CD4-positive, alpha-beta memory T cell (primary cell): ENCODE measurements at regions of chr1 and their contacts with region 1.

Region 1: GRCh38 chr1:3618881-3619671 is 5.7 kb upstream of the TPRG1L start:
- DNase-seq: peak; percentile 74 to 81 (median 78)
- H3K4me3 ChIP-seq: no peak overlapping the region
- H3K4me3 Mint-ChIP-seq: no peak overlapping the region
- H3K27ac ChIP-seq: no peak overlapping the region
- H3K27ac Mint-ChIP-seq: peak overlapping the region in 2 of 7 donors; percentile 53 to 60
- H3K4me1 ChIP-seq: peaks cover 27% of the 10 kb centered on the region
- H3K4me1 Mint-ChIP-seq: peaks cover 20 to 40% (median 34%) of the 10 kb centered on the region in 4 donors
- H3K27me3 ChIP-seq: no peaks in the 10 kb centered on the region
- H3K27me3 Mint-ChIP-seq: peaks cover 0 to 1% of the 10 kb centered on the region in 2 donors

Region 2: DNA sequence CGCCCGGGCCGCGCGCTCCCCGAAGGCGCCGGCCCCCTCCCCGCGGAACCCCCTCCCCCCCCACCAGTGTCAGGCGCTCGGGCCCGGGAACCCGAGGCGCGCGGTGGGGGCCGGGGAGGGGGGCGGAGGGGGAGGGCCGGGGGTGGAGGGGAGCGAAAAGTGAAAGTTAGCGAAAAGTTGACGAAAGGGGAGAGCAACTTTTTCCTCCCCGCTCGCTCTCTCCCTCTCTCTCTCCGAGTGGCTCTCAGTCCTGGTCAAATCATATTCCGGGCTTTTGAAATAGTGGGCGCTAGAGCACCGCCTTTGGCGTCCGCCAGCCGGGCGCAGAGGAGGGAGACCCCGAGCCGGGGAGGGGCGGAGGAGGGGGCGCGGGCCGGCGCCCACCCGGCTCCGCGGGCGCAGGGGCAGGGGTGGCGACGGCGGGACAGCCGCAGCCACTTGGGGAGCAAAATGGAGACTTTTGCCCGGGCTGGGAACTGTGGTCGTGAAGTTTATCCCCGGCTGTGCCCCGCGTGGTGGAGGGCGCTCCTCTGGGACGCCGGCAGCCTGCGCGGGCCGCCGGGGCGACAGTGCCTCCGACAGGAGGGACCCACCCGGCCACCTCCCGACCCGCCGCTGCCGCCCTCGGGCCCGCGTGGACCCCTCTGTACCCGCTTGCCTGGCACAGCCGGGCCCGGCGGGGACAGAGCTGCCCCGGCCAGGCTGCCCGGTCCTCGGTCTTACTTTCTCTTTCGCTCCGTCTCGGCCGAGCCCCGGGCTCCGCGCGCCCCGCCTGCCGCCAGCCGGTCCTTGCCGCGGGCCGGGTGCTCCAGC is 549.4 kb before region 1 on chr1:
- CTCF ChIA-PET with region 1: no interaction called
- POLR2A ChIA-PET with region 1: no interaction called
- intact Hi-C with region 1: no loop called
- DNase-seq: no peak
- H3K4me3 ChIP-seq: no peak overlapping the region
- H3K4me3 Mint-ChIP-seq: peak overlapping the region in 5 of 8 donors; percentile 39 to 80 (median 54)
- H3K27ac ChIP-seq: no peak overlapping the region
- H3K27ac Mint-ChIP-seq: no peak overlapping the region
- H3K4me1 ChIP-seq: no peaks in the 10 kb centered on the region
- H3K4me1 Mint-ChIP-seq: peaks cover 0 to 4% (median 2%) of the 10 kb centered on the region in 4 donors
- H3K27me3 ChIP-seq: no peaks in the 10 kb centered on the region
- H3K27me3 Mint-ChIP-seq: peaks cover 10 to 16% of the 10 kb centered on the region in 2 donors

Region 3: GRCh38 chr1:3453203-3453761 is 165.8 kb before region 1 on chr1:
- CTCF ChIA-PET with region 1: interaction called, 60 read pairs
- POLR2A ChIA-PET with region 1: interaction called, 5 read pairs
- intact Hi-C with region 1: loop called (anchors 1 kb)
- DNase-seq: peak; percentile 57 to 75 (median 64)
- H3K4me3 ChIP-seq: no peak overlapping the region
- H3K4me3 Mint-ChIP-seq: peak overlapping the region; percentile 46 to 82 (median 66)
- H3K27ac ChIP-seq: no peak overlapping the region
- H3K27ac Mint-ChIP-seq: peak overlapping the region in 1 of 7 donors; percentile 43
- H3K4me1 ChIP-seq: peaks cover 13% of the 10 kb centered on the region
- H3K4me1 Mint-ChIP-seq: peaks cover 0 to 7% (median 2%) of the 10 kb centered on the region in 4 donors
- H3K27me3 ChIP-seq: peaks cover 11% of the 10 kb centered on the region
- H3K27me3 Mint-ChIP-seq: peaks cover 7 to 8% of the 10 kb centered on the region in 2 donors

Region 4: GRCh38 chr1:3518256-3518655 is 100.8 kb before region 1 on chr1:
- CTCF ChIA-PET with region 1: interaction called, 12 read pairs
- POLR2A ChIA-PET with region 1: interaction called, 3 read pairs
- intact Hi-C with region 1: loop called (anchors 1 kb)
- DNase-seq: peak in 4 of 5 donors; percentile 17 to 27 (median 21)
- H3K4me3 ChIP-seq: no peak overlapping the region
- H3K4me3 Mint-ChIP-seq: no peak overlapping the region
- H3K27ac ChIP-seq: no peak overlapping the region
- H3K27ac Mint-ChIP-seq: no peak overlapping the region
- H3K4me1 ChIP-seq: no peaks in the 10 kb centered on the region
- H3K4me1 Mint-ChIP-seq: no peaks in the 10 kb centered on the region
- H3K27me3 ChIP-seq: no peaks in the 10 kb centered on the region
- H3K27me3 Mint-ChIP-seq: no peaks in the 10 kb centered on the region

Region 5: DNA sequence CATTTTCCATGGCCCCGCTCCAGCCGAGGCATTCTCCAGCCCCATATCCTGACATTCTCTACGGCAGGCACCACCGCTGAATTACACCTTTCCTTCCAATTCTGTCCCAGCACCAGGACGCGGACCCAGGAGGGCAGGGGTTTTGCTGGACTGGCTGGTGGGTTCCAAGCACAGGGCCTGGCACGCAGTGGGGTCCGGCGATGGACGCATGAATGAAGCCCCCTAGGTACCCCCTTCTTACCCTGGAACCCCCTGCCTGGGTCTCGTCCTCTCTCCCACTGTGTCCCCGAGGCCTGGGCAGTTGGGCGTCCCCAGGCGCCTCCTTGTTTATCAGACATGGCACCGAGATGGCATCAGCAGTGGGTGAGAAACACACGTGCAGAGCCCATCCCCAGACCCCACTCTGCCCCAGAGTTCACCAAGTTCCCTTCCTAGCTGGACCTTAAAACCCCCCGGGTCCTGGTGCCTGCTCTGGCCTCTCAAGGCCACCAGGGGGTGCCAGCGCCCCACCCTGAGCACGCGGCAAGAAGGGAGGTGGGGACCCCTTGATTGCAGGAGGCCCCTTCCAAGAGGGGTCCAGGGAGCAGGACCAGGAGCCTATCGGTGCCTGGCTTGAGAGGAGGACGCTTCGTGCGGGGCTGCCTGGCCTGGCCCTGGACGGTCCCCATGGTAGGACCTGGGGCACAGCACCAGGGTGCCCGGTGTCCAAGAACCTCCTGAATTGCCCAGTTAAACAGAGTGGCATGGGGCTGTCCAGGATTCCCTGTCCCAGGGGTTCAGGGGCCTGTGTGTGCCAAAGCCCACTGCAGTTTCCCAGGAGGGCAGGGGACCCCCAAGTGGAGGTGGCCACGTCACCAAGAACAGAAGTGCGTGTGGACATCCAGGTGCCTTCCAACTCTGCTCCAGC is 53.9 kb before region 1 on chr1:
- CTCF ChIA-PET with region 1: interaction called, 4 read pairs
- POLR2A ChIA-PET with region 1: no interaction called
- intact Hi-C with region 1: loop called (anchors 1 kb)
- DNase-seq: peak in 4 of 5 donors; percentile 13 to 26 (median 18)
- H3K4me3 ChIP-seq: no peak overlapping the region
- H3K4me3 Mint-ChIP-seq: no peak overlapping the region
- H3K27ac ChIP-seq: no peak overlapping the region
- H3K27ac Mint-ChIP-seq: no peak overlapping the region
- H3K4me1 ChIP-seq: no peaks in the 10 kb centered on the region
- H3K4me1 Mint-ChIP-seq: no peaks in the 10 kb centered on the region
- H3K27me3 ChIP-seq: no peaks in the 10 kb centered on the region
- H3K27me3 Mint-ChIP-seq: peaks cover 3 to 7% of the 10 kb centered on the region in 2 donors

Region 6: DNA sequence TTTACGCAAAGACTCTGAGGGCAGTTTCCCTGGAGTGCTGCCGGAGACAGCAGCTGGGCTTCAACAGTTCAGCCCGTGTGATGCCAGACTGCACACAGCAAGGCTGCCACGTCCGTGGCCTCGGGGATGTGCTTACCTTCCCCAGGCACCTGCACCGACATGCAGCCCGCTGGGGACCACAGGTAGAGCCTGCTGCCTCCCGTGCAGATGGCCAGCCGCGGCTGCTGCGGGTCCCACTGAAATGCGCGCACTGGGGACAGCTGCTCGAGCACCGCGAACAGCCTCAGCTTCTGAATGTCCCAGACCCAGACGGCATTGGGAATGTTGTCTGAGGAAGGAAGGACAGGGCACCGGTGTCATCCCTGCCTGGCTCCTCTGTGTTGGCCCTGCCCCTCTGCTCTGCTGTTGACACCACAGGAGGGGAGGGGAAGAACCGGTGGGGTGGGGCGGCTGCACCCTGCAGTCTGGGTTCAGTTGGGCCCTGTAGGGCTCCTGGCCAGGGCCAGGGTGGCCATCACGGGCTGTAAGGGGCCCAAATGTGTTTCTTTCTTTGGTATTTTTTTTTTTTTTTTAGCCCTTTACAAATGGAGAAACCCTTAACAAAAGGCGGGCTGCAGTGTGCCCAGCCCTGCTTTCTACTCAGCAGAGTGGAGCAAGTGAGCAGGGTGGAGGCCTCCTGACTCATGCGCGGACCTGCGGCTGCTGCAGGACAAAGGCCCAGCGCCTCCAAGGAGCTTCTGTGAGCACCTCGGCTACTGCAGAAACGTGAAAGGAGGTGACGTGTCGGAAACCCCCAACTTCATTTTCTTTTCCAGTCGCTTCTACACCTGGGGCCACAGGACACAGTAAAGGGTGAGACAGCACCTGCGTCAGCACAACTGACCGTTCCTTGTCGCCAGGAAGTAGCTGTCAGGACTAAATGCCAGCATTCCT is 12.5 kb after region 1 on chr1:
- CTCF ChIA-PET with region 1: interaction called, 12 read pairs
- POLR2A ChIA-PET with region 1: no interaction called
- intact Hi-C with region 1: no loop called
- DNase-seq: no peak
- H3K4me3 ChIP-seq: no peak overlapping the region
- H3K4me3 Mint-ChIP-seq: no peak overlapping the region
- H3K27ac ChIP-seq: no peak overlapping the region
- H3K27ac Mint-ChIP-seq: no peak overlapping the region
- H3K4me1 ChIP-seq: no peaks in the 10 kb centered on the region
- H3K4me1 Mint-ChIP-seq: peaks cover 0 to 1% (median 0%) of the 10 kb centered on the region in 4 donors
- H3K27me3 ChIP-seq: no peaks in the 10 kb centered on the region
- H3K27me3 Mint-ChIP-seq: no peaks in the 10 kb centered on the region